Heart right ventricle (tissue), 16 donors: ENCODE measurements at regions of chr4 and their contacts with region 1.

Region 1: GRCh38 chr4:151801547-151802516 is 41.0 kb upstream of the GATB start:
- DNase-seq: no peak
- ATAC-seq: no peak
- H3K4me3 ChIP-seq: no peak overlapping the region
- H3K27ac ChIP-seq: peak overlapping the region in 1 of 10 donors; percentile 32
- H3K4me1 ChIP-seq: peaks cover 0 to 31% (median 9%) of the 10 kb centered on the region in 9 donors
- H3K27me3 ChIP-seq: no peaks in the 10 kb centered on the region
- CTCF ChIP-seq: peak; percentile 48 to 95 (median 72)

Region 2: DNA sequence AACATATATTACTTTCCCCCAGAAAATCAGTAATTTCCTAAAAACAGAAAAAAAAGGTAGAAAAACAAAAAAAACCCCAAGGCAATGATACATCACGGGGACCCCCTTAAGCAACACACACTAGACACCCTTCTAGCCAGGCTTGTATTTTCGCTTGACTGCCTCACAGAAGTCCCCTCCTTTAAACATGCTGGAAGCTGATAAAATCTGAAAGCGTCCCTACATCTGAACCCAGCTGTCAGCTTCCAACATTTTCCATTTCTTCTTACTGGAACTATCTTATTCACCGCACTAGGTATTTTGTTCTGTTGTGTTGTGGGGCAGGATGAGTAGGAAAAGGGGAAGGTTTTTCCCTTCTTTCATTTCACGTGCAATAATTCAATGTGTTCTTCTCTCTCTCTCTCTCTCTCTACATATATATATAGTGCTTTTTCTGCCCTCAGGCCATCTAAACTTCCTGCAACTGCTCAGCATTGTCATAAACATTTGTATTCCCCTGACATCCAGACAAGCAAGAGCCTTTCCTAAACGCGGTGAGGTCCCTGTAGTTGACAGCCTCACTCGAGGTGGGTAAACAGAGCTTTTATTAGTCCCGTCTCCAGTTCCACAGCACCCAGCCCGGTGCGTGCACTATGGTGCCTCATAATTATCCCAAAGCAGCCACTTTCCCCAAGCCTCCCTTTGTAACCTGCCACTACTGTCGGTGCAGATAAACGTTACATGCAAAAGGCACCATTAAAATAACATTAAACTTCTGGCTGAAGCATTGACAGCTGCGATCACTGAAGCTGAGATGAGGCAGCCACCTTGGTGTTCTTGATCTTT is 123.6 kb before region 1 on chr4:
- intact Hi-C with region 1: no loop called
- DNase-seq: no peak
- ATAC-seq: no peak
- H3K4me3 ChIP-seq: no peak overlapping the region
- H3K27ac ChIP-seq: no peak overlapping the region
- H3K4me1 ChIP-seq: peaks cover 6 to 32% (median 21%) of the 10 kb centered on the region in 9 donors
- H3K27me3 ChIP-seq: no peaks in the 10 kb centered on the region
- CTCF ChIP-seq: no peak

Region 3: GRCh38 chr4:151781026-151781425 is 20.8 kb before region 1 on chr4:
- intact Hi-C with region 1: loop called in 1 of 10 experiments (anchors 1 kb)
- DNase-seq: peak; percentile 20 to 69
- ATAC-seq: peak; percentile 80 to 96 (median 92)
- H3K4me3 ChIP-seq: no peak overlapping the region
- H3K27ac ChIP-seq: peak overlapping the region in 9 of 10 donors; percentile 41 to 79 (median 56)
- H3K4me1 ChIP-seq: peaks cover 0 to 37% (median 9%) of the 10 kb centered on the region in 9 donors
- H3K27me3 ChIP-seq: no peaks in the 10 kb centered on the region
- CTCF ChIP-seq: no peak

Region 4: DNA sequence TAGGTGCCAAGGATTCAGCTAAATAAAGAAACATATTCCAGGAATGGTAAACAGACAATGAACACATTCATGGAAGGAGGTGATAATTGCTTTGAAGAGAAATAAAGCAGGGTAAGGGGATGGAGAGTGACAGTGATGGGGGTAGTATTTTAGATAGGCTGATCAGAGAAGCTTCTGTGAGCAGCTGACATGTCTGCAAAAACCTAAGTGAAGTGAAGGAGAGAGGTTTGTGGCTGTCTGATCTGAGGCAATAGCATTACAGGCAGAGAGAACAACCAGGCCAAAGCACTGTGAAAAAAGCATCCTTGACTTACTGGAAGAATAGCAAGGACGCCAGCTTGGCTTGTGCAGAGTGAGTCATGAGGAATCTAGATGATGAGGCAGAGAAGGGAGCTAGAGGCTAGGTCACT is 230.9 kb after region 1 on chr4:
- intact Hi-C with region 1: loop called in 5 of 10 experiments (anchors 2 to 10 kb)
- DNase-seq: no peak
- ATAC-seq: peak in 6 of 8 donors; percentile 48 to 91 (median 54)
- H3K4me3 ChIP-seq: no peak overlapping the region
- H3K27ac ChIP-seq: peak overlapping the region in 9 of 10 donors; percentile 34 to 74 (median 55)
- H3K4me1 ChIP-seq: peaks cover 0 to 18% (median 4%) of the 10 kb centered on the region in 9 donors
- H3K27me3 ChIP-seq: no peaks in the 10 kb centered on the region
- CTCF ChIP-seq: no peak

Region 5: DNA sequence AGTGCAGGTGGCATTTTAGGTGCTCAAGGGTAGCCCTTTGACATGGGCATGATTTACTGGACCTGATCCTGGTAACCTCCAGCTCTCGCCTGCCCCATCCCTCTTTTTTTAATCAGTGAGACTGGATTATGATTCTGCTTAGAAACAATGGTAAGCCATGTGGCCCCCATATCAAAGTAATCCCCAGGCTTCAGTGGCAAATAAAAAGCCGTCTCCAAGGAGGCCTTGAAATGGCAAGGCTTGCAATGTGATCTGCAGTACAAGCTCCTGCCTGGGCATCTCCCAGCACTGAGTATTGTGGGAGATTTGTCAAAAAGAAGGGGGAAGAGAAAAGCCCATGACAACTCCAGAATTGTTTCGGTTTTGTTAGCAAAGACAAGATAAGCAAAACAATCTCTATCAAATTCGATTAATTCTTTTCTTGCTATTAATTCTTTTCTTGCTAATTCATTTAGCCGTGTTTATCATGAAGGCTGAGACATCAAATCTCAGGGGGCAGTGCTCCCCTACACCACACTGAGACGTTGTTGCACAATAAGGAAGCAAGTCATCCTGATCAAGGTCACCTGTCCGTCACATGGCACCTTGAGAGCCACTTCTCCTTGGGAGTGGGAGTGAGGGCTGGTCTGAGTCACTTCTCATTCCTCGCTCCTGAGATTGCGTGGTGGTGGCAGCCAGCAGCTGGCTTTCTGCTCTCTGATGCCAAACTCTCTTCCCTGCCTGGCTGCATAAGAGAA is 271.7 kb after region 1 on chr4:
- intact Hi-C with region 1: loop called in 1 of 10 experiments (anchors 10 kb)
- DNase-seq: peak in 1 of 2 donors; percentile 10
- ATAC-seq: peak in 4 of 8 donors; percentile 36 to 79 (median 68)
- H3K4me3 ChIP-seq: no peak overlapping the region
- H3K27ac ChIP-seq: no peak overlapping the region
- H3K4me1 ChIP-seq: peaks cover 0 to 13% (median 7%) of the 10 kb centered on the region in 9 donors
- H3K27me3 ChIP-seq: no peaks in the 10 kb centered on the region
- CTCF ChIP-seq: no peak